Psoas muscle (tissue), 8 donors: ENCODE measurements at regions of chr14 and their contacts with region 1.

Region 1: GRCh38 chr14:31561155-31561846 is at the start of gene NUBPL:
- DNase-seq: peak; percentile 97 to 98
- ATAC-seq: peak; percentile 98 to 100 (median 98)
- H3K4me3 ChIP-seq: peak within 1 kb of the TSS; percentile 94
- H3K27ac ChIP-seq: peak within 1 kb of the TSS; percentile 91
- H3K4me1 ChIP-seq: peaks cover 9% of the 10 kb centered on the region
- H3K27me3 ChIP-seq: no peaks in the 10 kb centered on the region
- CTCF ChIP-seq: no peak
- total RNA-seq, gene NUBPL: 7.0 to 16.3 (median 12.4) TPM

Region 2: GRCh38 chr14:31456841-31457664 is 104.2 kb before region 1 on chr14 and contains the start of gene DTD2:
- intact Hi-C with region 1: loop called in 1 of 2 experiments (anchors 5 kb)
- DNase-seq: peak; percentile 95 to 97
- ATAC-seq: peak; percentile 99 to 100 (median 100)
- H3K4me3 ChIP-seq: peak within 1 kb of the TSS; percentile 90
- H3K27ac ChIP-seq: peak within 1 kb of the TSS; percentile 94
- H3K4me1 ChIP-seq: peaks cover 11% of the 10 kb centered on the region
- H3K27me3 ChIP-seq: no peaks in the 10 kb centered on the region
- CTCF ChIP-seq: no peak
- total RNA-seq, gene DTD2: 2.1 to 4.2 (median 3.3) TPM

Region 3: DNA sequence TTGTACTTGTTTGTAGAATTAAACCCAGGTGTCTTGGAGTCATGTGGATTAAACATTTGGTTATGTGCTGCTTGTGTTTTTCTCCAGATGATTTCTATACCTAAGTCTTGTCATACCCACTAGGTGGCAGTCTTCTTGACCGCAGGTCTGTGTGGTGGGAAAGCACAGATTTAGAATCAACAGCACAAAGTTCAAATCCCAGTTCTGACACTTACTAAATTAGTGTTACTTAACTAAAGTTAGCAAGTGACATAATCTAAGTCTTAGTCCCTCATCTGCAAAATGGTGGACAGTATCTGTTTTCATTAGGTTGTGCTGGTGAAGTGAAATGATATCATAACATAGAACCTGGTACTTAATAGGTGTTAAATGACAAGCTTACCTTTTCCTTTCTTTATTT is 364.8 kb after region 1 on chr14:
- intact Hi-C with region 1: loop called in 1 of 2 experiments (anchors 10 kb)
- DNase-seq: no peak
- ATAC-seq: peak; percentile 32 to 61 (median 49)
- H3K4me3 ChIP-seq: no peak overlapping the region
- H3K27ac ChIP-seq: peak overlapping the region; percentile 80
- H3K4me1 ChIP-seq: peaks cover 19% of the 10 kb centered on the region
- H3K27me3 ChIP-seq: no peaks in the 10 kb centered on the region
- CTCF ChIP-seq: peak; percentile 50